Mammary epithelial cell (primary cell): ENCODE measurements at regions of chr21 and their contacts with region 1.

Region 1: DNA sequence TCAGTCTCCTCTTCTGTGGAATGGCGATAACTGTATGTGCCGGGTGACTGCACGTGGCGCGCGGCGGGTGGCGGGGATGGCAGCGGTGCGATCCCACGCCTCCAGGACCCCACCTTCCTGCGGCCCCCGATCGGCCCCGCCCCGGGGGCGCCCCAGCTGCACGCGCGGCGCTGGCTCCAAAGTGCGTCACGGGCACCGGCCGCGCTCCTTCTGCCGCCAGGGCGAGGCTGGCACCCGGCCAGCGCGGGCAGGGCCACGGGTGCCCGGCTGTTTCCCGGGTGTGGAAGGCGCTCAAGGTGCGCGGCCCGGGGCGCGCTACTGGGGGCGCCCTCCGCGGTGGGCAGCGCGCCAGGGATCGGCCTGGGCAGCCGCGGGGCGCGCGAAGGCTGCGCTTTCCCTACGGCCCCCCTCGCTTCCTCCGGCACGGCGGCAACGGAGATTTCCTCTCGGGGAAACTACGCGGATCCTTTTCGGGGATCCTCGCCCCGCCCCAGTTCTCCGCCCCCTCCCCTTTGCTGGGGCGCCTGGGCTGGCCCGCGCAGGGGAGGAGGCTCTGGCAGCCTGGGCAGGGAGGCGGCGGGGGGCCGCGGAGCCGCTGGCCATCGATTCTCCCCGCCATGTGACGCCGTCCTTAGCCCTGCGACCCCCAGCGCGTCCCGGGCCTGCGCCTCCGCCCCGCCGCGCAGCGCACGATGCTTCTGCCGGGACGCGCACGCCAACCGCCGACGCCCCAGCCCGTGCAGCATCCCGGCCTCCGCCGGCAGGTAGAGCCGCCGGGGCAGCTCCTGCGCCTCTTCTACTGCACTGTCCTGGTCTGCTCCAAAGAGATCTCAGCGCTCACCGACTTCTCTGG is at the start of gene EVA1C:
- DNase-seq: peak; percentile 69
- H3K4me3 ChIP-seq: peak within 1 kb of the TSS; percentile 68 to 80 (median 69)
- H3K27ac ChIP-seq: peak within 1 kb of the TSS; percentile 86
- H3K4me1 ChIP-seq: peaks cover 33% of the 10 kb centered on the region
- H3K27me3 ChIP-seq: no peaks in the 10 kb centered on the region
- CTCF ChIP-seq: peak; percentile 3 to 20
- total RNA-seq, gene EVA1C: 11.7 to 28.4 TPM

Region 2: DNA sequence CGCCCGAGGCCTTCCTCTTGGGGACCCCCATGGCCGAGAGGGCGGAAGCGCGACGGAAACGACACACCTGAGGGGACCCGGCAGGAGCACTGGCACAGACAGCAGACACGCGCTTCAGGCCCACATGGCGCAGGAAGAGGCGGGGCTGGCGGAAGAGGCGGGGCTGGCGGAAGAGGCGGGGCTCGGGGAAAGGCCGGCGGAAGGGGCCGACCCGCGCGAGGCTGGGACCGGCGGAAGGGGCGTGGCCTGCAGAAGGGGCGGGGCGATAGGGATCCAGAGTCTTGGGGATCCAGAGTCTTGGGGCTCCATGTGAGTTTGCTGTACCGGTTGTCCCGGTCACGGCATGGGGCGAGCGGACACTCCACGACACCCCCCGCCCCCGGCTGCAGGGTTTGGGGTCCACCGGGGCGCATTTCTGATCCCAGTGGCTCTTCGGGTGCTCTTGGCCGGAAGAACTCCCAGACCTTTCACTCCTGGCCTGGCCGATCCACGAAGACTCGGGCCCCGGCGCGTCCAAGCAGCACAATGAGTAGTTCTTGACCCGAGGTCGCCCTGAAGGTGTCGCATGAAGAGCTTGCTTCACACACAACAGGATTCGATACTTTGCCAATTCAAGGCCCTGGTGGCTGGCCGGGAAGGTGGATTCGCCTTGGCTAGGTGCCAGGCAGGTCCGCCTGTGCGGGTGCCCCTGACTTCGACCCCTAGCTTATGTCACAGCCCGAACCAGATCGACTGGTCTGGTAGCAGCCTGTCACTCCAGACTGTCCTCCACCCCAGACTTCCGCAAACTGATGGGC is 19.3 kb before region 1 on chr21 and contains the start of gene URB1:
- CTCF ChIA-PET with region 1: no interaction called
- dilution Hi-C with region 1: no loop called
- in situ Hi-C with region 1: no loop called
- intact Hi-C with region 1: loop called (anchors 2 kb)
- DNase-seq: peak; percentile 80
- H3K4me3 ChIP-seq: peak within 1 kb of the TSS; percentile 87 to 97 (median 94)
- H3K27ac ChIP-seq: peak within 1 kb of the TSS; percentile 57
- H3K4me1 ChIP-seq: peaks cover 28% of the 10 kb centered on the region
- H3K27me3 ChIP-seq: no peaks in the 10 kb centered on the region
- CTCF ChIP-seq: peak in 1 of 2 donors; percentile 1
- total RNA-seq, gene URB1: 32.2 to 36.4 TPM

Region 3: DNA sequence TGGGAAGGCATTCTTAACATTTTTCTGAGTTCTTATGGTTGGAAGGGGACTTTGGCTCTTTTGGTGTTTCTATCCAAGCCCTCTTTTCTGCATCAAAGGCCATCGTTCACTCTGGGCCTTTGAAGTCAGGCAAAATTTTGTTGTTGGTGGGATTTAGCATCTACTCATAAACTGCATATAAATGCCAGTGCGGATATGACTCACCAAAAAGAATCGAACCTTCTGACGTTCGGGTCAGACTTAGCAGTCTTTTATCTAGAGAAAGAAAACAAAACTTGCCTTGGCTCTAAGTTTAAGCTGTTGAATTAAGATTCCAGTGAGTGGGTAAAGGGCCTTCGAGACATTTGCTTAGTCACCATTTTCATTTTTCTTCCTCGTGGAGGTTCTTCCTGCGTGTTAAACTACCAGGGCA is 51.5 kb after region 1 on chr21:
- CTCF ChIA-PET with region 1: no interaction called
- dilution Hi-C with region 1: no loop called
- in situ Hi-C with region 1: no loop called
- intact Hi-C with region 1: loop called (anchors 5 kb)
- DNase-seq: peak; percentile 54
- H3K4me3 ChIP-seq: no peak overlapping the region
- H3K27ac ChIP-seq: peak overlapping the region; percentile 70
- H3K4me1 ChIP-seq: peaks cover 22% of the 10 kb centered on the region
- H3K27me3 ChIP-seq: no peaks in the 10 kb centered on the region
- CTCF ChIP-seq: no peak

Region 4: GRCh38 chr21:32494934-32495703 is 82.7 kb after region 1 on chr21:
- CTCF ChIA-PET with region 1: no interaction called
- dilution Hi-C with region 1: no loop called
- in situ Hi-C with region 1: no loop called
- intact Hi-C with region 1: loop called (anchors 5 kb)
- DNase-seq: peak; percentile 68
- H3K4me3 ChIP-seq: no peak overlapping the region
- H3K27ac ChIP-seq: no peak overlapping the region
- H3K4me1 ChIP-seq: peaks cover 3% of the 10 kb centered on the region
- H3K27me3 ChIP-seq: no peaks in the 10 kb centered on the region
- CTCF ChIP-seq: no peak

Region 5: DNA sequence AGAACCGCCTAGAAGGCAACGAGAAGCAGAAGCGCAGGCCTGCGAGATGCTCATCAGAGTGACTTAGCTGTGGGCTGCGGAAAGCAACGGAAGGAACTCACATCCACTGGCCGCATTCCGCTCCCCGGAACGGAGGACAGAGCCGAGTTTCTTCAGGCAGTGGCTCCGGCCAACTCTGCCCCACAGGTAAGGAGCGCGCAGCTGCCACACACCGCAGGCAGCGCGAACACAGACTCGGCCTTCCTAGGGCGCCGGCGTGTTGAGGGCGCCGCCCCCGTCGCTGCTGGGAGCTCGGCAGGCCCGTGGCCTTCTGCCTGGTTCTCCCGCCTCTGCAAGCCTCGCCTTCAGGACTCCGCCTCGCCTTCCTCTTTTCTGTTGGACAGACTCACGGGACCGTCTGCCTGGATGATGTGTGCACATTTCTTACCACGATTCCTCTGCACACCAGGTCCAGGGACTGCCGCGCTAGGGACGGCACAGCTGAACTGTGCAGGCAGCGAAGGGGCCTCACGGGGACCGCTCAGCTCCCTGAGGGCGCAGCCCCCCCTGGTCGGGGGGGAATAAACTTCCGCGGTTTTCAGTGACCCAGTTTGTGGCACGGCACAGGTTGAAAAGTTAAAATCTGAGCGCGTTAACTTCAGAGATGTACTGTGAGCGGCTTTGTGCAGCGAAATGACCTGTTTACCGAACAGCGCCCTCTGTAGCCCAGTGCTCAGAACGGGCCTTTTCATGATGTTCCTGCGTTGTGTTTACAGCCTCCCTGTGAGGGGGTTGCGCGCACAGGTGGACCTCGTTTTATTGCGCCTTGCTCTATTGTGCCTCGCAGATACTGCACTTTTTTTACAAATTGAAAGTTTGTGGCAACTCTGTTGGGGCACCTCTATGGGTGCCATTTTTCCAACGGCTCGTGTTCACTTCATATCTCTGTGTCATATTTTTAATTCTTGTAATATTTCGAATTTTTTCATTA is 157.2 kb after region 1 on chr21:
- CTCF ChIA-PET with region 1: no interaction called
- dilution Hi-C with region 1: no loop called
- in situ Hi-C with region 1: no loop called
- intact Hi-C with region 1: loop called (anchors 1 kb)
- DNase-seq: peak; percentile 78
- H3K4me3 ChIP-seq: peak overlapping the region; percentile 44 to 63 (median 56)
- H3K27ac ChIP-seq: no peak overlapping the region
- H3K4me1 ChIP-seq: peaks cover 22% of the 10 kb centered on the region
- H3K27me3 ChIP-seq: no peaks in the 10 kb centered on the region
- CTCF ChIP-seq: peak; percentile 89 to 92